Posterior vena cava (tissue), 2 donors: ENCODE measurements at regions of chr2 and their contacts with region 1.

Region 1: DNA sequence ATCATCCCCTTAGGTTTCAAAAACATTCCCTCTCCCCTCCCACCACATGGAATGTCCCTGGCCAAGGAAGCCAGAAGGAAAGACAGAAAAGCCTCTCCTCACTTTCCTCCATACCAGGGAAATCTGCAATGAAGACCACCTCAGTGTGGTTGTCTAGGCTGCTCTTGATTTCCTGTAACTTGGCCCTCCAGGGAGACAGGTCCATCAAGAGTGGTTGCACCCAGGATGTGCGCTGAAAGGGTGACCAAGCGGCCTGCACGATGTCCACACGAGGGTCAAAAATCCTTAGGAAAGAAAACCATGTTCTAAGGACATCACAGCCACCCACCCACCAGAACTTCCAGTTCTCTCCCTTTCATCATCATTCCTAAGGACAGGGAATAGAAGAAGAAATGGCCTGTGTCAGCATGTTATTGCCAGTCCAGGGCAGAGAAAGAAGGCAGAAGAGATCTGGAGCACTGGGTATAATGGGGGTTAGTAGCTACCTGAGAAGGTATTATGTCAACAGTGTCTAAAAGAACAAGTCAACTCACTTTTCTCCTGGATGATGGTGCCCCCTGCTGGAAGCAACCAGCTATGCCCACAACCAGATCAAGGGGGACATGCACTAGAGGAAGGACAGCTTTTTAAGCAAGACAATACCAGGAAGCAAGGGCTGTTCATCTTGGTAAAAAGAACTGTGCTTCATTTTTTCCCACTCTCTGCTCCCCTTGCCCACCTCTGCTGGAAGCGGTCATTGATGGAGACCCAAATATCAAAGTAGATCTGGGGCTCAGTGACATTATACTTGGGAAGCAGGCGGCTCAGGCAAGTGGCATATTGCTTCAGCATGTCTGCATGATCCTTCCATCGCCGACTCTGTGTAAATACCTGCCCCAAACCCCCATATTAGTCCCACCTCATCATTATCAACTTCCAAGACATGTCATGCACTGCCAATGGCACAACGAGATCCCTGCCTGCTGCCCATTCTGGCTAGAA is 9.3 kb downstream of the GGCX start:
- DNase-seq: peak; percentile 90

Region 2: GRCh38 chr2:85420536-85421259 is 131.3 kb before region 1 on chr2:
- intact Hi-C with region 1: loop called (anchors 2 kb)
- DNase-seq: peak; percentile 97

Region 3: DNA sequence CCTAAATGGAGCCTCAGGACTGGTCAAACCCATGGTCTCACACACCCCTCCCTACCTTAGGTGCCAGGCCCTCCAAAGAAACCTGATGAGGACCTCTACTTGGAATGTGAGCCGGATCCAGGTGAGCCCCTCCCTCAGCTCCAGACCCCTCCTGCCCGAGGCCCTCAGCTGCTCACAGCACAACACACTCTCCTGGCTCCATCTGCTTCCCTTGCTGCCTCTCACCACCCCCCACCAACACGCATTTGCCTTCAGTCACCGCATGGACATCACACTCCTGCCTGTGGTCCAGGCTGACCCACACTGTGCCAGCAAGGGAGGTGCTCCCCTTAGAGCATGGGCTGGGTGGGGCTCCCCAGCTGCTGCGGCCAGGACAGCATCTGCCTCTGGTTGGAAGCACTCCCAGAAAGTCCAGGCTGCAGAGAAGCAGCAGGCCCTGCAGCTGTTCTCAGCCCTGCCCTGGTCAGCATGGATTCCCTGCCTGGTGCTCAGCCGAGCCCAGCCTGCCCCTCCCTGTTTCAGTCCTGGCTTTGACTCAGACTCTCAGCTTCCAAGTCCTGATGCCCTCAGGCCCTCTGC is 118.4 kb before region 1 on chr2:
- intact Hi-C with region 1: loop called in 1 of 2 experiments (anchors 5 kb)
- DNase-seq: peak; percentile 93